ENCODE measurements at regions of chr20 and their contacts with region 1.

Region 1: GRCh38 chr20:31849455-31849925 is 4.1 kb upstream of the FOXS1 start:
- DNase-seq: peak; percentile 48
- H3K4me3 ChIP-seq: no peak overlapping the region
- H3K27ac ChIP-seq: no peak overlapping the region
- H3K4me1 ChIP-seq: peaks cover 0 to 4% of the 10 kb centered on the region in 2 experiments; a peak in 2 of 4 replicates
- H3K27me3 ChIP-seq: no peaks in the 10 kb centered on the region; the same call in 1 of the 2 replicates
- CTCF ChIP-seq: no peak
- EP300 ChIP-seq: no peak
- RAD21 ChIP-seq: no peak

Region 2: DNA sequence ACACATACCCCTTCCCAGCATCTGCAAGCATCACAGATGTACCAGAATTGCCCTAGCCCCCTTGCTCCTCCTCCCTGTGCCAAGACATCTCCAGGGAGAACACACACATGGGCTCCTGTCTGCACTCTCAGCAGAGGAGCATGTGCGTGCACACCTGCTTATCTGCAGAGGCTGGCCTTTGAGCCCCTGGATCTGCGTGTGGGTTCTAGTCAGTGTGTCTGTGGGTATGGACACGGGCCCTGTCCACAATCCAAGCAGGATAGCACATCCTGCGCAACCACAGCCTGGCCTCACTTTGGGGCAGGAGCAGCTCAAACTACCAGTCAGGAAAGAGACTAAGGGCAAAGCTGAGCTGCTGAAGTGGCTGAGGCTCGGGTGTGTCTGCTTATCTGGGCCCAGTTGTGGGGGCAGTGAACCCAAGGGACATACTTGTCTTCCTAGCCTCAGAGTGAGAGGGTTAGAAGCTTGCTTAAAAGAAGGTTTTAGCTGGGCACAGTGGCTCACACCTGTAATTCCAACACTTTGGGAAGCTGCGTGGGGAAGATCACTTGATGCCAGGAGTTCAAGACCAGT is 294.2 kb before region 1 on chr20:
- CTCF ChIA-PET with region 1: no interaction called
- POLR2A ChIA-PET with region 1: no interaction called
- DNase-seq: no peak
- H3K4me3 ChIP-seq: no peak overlapping the region
- H3K27ac ChIP-seq: no peak overlapping the region
- H3K4me1 ChIP-seq: peaks cover 6 to 13% of the 10 kb centered on the region in 2 experiments
- H3K27me3 ChIP-seq: no peaks in the 10 kb centered on the region
- CTCF ChIP-seq: no peak
- EP300 ChIP-seq: no peak
- RAD21 ChIP-seq: no peak

Region 3: DNA sequence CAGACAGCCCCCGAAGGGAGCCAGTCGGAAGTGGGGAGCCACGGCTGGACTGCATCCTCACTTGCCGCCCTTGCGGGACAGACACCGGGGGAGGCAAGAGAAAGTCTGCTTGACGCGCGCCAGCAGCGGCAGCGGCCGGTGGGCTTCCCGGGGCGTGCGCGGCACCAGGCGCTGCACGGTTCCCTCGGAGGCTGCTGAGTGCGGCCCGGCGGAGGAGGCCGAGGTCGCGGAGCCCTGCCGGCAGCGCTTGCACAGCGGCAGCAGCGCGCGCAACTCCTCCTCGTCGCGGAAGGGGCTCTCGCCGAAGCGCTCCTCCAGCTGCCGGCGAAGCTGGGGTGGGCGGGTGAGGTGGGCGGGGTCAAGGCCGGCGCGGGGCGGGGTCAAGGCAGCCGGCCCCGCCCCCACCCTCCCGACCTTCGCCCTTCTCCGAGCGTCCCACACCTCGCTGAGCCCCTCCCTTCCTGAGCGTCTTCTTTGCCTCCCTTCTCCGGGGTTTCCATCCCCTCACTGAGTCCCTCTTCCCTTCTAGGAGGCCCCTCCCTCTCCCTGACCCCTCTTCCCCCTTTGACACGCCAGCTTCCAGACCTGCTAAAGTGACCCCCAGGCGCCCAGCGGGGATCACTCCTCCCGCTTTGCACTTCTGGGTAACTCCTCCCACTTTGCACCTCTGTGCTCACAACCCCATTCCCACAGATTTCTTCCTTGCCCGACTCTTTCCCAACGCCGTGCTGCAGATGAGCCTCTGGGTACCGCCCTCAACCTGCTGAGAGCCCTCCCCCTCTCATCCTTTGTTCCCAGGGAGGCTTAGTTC is 12.1 kb after region 1 on chr20:
- CTCF ChIA-PET with region 1: interaction called, 36 read pairs
- POLR2A ChIA-PET with region 1: no interaction called
- DNase-seq: peak; percentile 99
- H3K4me3 ChIP-seq: peak overlapping the region; percentile 62 to 63
- H3K27ac ChIP-seq: peak overlapping the region in 1 of 2 experiments; percentile 82; a peak in 2 of 4 replicates
- H3K4me1 ChIP-seq: peaks cover 0 to 21% of the 10 kb centered on the region in 2 experiments; a peak in 2 of 4 replicates
- H3K27me3 ChIP-seq: no peaks in the 10 kb centered on the region
- CTCF ChIP-seq: no peak
- EP300 ChIP-seq: no peak
- RAD21 ChIP-seq: no peak

Region 4: DNA sequence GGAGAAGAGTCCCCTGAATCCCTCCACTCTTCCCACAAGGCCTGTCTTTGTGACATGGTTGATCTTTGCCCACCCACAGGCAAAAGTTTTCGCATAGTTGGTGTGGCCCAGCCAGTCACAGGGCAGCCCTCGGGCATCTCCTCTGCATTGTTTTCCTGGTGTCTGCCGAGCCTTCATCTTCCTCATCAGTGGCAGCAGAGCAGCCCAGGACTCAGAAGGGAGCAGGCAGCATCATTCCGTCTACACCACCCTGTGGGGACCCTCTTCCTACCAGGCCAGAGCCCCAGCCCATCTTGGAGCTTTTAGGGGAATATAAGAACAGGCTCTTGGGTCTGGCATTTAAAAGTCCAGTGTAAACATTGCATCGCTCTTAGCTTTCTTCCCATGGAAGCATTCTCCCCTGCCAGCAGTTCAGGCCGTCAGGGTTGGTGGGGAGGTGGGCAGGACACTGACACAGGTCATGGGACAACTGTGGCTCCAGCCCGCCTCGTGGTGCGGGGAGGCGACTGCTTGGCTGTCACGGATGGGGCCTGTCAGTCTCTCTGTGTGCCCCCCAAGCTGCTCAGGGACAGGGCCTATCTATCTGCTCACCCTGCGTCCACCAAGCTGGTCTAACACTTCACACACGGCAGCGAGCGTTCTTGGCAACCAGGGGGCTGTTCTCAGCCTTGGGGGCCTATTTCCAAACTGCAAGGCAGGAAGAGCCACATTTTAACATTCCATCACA is 64.1 kb after region 1 on chr20:
- CTCF ChIA-PET with region 1: interaction called, 15 read pairs
- POLR2A ChIA-PET with region 1: no interaction called
- DNase-seq: no peak
- H3K4me3 ChIP-seq: no peak overlapping the region
- H3K27ac ChIP-seq: no peak overlapping the region
- H3K4me1 ChIP-seq: peaks cover 0 to 21% of the 10 kb centered on the region in 2 experiments; a peak in 1 of 4 replicates
- H3K27me3 ChIP-seq: no peaks in the 10 kb centered on the region
- CTCF ChIP-seq: no peak
- EP300 ChIP-seq: no peak
- RAD21 ChIP-seq: no peak

Region 5: DNA sequence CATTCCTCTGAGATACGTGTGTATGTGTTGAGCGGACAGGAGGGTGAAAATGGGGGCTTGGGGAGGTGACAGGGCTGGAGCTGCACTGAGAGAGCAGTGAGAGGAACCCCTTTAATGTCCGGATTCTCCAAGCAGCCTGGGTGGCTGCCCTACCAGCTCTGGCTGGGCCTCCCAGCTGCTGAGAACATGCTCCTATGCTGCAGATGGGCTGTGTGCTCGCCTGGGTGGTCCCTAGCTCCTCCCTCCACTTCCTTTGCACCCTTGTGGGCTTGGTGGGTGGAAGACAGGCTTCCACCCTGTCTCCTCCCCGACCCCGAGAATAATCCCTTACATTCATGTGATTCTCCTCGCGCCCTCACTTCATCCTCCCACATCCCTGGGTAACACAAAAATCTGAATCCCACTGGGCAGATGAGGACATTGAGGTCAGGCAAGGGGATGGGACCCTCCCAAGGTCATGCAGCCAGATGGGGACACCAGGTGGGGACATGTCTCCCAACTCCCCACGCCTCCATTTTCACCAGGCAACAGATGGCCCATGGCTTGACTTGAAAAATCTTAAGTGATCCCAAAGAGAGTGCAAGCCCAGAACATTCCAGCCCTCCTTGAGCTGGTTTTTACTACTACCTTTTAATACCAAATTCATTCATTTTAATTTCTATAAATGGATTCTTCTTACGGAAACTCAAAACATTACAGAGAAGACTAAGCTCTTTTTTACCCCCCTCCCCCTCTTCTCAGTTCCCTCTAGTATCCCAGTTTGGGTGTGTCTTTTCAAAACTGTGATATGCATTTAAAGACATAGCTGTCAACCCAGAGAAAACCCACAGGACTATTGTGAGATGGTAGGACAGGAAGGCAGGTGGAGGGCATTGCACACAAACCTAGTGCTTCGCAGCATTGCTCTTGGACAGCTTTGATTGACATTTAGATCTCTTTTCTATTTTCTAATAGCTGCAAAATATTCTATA is 107.4 kb after region 1 on chr20:
- CTCF ChIA-PET with region 1: interaction called, 158 read pairs
- POLR2A ChIA-PET with region 1: interaction called, 5 read pairs
- DNase-seq: no peak
- H3K4me3 ChIP-seq: no peak overlapping the region
- H3K27ac ChIP-seq: no peak overlapping the region
- H3K4me1 ChIP-seq: no peaks in the 10 kb centered on the region
- H3K27me3 ChIP-seq: peaks cover 26% of the 10 kb centered on the region
- CTCF ChIP-seq: no peak
- EP300 ChIP-seq: no peak
- RAD21 ChIP-seq: no peak

Region 6: DNA sequence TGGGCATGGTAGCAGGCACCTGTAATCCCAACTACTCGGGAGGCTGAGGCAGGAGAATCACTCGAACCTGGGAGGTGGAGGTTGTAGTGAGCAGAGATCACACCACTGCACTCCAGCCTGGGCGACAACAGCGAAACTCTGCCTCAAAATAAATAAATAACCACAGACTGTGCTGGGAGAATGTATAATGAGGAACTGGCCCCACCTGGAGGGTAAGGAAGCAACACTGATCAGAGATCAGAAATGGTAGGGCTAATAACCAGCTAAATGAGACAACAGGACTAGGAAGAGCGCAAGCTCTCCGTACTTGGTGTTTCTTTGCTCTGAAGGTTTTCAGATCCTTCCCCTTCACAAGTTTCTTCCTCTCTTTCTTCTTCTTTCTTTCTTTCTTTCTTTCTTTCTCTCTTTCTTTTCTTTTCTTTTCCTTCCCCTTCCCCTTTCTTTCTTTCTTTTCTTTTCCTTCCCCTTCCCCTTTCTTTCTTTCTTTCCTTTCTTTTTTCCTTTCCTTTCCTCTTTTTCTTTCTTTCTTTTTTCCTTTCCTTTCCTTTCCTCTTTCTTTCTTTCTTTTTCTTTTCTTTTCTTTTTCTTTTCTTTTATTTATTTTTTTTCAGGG is 175.3 kb after region 1 on chr20:
- CTCF ChIA-PET with region 1: interaction called, 170 read pairs
- POLR2A ChIA-PET with region 1: interaction called, 3 read pairs
- DNase-seq: no peak
- H3K4me3 ChIP-seq: no peak overlapping the region
- H3K27ac ChIP-seq: no peak overlapping the region
- H3K4me1 ChIP-seq: peaks cover 0 to 6% of the 10 kb centered on the region in 2 experiments; a peak in 1 of 4 replicates
- H3K27me3 ChIP-seq: peaks cover 35% of the 10 kb centered on the region
- CTCF ChIP-seq: no peak
- EP300 ChIP-seq: no peak
- RAD21 ChIP-seq: no peak

Measured in SK-N-SH (cell line).